Mammary epithelial cell (primary cell): ENCODE measurements at regions of chr14 and their contacts with region 1.

Region 1: DNA sequence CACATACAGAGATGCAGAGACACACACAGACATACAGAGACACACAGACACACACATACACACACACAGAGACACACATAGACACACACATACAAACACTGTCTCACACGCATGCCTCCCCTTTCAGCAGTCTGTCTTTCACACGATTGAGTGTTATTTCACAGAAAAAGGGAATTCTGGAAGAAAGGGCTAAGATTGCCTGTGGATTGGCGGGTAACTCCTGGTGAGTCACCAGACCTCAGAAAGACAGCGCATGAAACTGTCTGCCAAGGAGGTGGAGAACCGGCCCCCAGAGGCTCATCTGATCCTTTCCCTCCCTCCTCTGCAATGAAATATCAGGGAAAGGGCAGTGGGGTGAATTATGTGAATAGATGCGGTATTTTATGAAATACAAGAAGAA is 127.2 kb upstream of the GSC start:
- DNase-seq: no peak
- H3K4me3 ChIP-seq: no peak overlapping the region
- H3K27ac ChIP-seq: no peak overlapping the region
- H3K4me1 ChIP-seq: no peaks in the 10 kb centered on the region
- H3K27me3 ChIP-seq: no peaks in the 10 kb centered on the region
- CTCF ChIP-seq: no peak

Region 2: DNA sequence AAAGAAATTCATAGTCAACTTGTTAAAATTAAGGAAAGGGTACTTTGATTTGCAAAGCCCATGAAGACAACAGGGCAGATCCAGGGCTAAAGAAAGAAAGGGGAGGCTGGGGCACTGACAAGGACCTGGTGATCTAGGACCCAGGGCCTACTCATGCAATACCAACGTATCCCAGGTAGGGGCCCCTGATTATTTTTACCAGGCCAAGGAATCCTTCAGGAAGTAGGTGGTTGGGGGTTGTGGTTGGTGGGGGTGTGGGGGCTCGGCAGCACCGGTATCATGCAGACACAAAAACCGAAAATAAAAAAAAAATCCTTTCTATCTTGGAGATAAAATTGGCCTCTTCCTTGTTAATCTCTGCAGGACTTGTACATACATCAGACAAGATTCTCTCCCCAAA is 174.7 kb before region 1 on chr14:
- CTCF ChIA-PET with region 1: no interaction called
- dilution Hi-C with region 1: no loop called
- in situ Hi-C with region 1: no loop called
- intact Hi-C with region 1: no loop called
- DNase-seq: no peak
- H3K4me3 ChIP-seq: no peak overlapping the region
- H3K27ac ChIP-seq: no peak overlapping the region
- H3K4me1 ChIP-seq: no peaks in the 10 kb centered on the region
- H3K27me3 ChIP-seq: peaks cover 2% of the 10 kb centered on the region
- CTCF ChIP-seq: no peak

Region 3: DNA sequence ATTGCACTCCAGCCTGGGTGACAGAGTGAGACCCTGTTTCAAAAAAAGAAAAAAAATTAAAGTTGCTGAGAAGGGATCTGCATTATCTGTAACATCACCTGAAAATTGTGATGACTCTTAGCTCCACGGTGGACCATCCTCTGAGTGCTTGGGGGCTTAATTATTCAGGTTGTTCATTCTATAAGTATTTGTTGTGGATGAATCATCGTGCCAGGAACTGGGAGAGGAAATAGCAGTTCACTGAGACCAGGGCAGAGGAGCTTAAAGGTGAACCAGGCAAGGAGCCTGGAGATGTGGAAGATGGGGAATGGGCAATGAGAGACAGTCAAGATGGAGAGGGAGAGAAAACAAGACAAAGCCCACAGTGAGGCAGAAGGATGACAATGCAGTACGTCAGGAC is 101.7 kb before region 1 on chr14:
- CTCF ChIA-PET with region 1: no interaction called
- dilution Hi-C with region 1: no loop called
- in situ Hi-C with region 1: no loop called
- intact Hi-C with region 1: no loop called
- DNase-seq: no peak
- H3K4me3 ChIP-seq: no peak overlapping the region
- H3K27ac ChIP-seq: no peak overlapping the region
- H3K4me1 ChIP-seq: no peaks in the 10 kb centered on the region
- H3K27me3 ChIP-seq: no peaks in the 10 kb centered on the region
- CTCF ChIP-seq: no peak

Region 4: GRCh38 chr14:94823556-94824338 is 73.3 kb before region 1 on chr14:
- CTCF ChIA-PET with region 1: no interaction called
- dilution Hi-C with region 1: loop called (anchors 5 kb)
- in situ Hi-C with region 1: no loop called
- intact Hi-C with region 1: no loop called
- DNase-seq: peak; percentile 50
- H3K4me3 ChIP-seq: no peak overlapping the region
- H3K27ac ChIP-seq: no peak overlapping the region
- H3K4me1 ChIP-seq: no peaks in the 10 kb centered on the region
- H3K27me3 ChIP-seq: no peaks in the 10 kb centered on the region
- CTCF ChIP-seq: no peak

Region 5: GRCh38 chr14:94857950-94858349 is 39.1 kb before region 1 on chr14:
- CTCF ChIA-PET with region 1: interaction called, 12 read pairs
- dilution Hi-C with region 1: no loop called
- in situ Hi-C with region 1: no loop called
- intact Hi-C with region 1: no loop called
- DNase-seq: no peak
- H3K4me3 ChIP-seq: no peak overlapping the region
- H3K27ac ChIP-seq: no peak overlapping the region
- H3K4me1 ChIP-seq: no peaks in the 10 kb centered on the region
- H3K27me3 ChIP-seq: no peaks in the 10 kb centered on the region
- CTCF ChIP-seq: no peak

Region 6: DNA sequence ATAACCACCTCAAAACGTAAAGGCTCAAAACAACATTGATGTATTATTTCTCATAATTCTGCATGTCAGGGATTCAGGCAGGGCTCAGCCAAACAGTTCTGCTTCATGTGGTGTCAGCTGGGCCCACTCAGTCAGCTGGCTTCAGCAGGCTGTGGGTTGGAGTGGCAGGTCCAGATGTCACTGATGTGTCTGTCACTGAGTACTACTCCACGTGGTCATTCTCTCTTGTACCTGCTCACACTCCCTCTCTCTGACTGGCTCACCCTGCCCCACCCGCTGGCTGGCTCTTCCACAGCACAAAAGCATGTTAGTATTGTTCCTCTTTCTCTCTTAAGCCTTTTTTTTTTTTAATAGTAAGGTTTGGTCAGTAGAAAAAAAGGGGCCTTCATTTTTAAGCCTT is 77.8 kb after region 1 on chr14:
- CTCF ChIA-PET with region 1: no interaction called
- dilution Hi-C with region 1: loop called (anchors 5 kb)
- in situ Hi-C with region 1: no loop called
- intact Hi-C with region 1: no loop called
- DNase-seq: no peak
- H3K4me3 ChIP-seq: no peak overlapping the region
- H3K27ac ChIP-seq: no peak overlapping the region
- H3K4me1 ChIP-seq: no peaks in the 10 kb centered on the region
- H3K27me3 ChIP-seq: no peaks in the 10 kb centered on the region
- CTCF ChIP-seq: no peak